ENCODE measurements at regions of chr1 and their contacts with region 1.

Region 1: DNA sequence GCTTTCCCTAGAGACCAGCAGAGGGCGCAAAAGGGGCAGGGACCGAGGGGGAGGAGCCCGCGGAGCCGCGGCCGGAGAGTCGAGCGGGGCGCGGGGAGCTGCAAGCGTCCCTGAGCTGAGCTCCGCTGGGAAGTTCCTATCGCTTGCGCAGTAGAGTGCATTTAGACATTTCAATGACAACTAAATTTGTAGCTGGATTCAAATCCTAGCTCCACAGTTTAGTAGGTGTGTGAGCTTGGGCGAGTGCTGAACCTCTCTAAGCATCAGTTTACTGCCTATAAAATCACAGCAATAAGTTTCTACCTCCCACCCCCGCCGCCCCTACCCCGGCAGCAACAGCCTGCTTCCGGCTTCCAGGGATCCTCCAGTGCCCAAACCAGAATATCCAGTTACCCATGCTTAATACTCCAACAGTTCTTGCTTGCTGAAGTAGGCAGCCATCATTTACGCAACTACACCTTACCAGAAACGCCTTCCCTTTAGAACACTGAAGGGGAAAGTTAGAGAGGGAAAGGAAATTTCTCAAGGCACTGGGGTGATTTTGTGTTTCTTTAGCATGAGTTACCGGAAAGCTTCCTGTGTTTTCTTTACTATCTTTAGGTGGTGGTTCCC is 9.1 kb downstream of the TLR5 start:
- DNase-seq: peak; percentile 84
- H3K4me3 ChIP-seq: peak overlapping the region; percentile 17 to 38 (median 32)
- H3K27ac ChIP-seq: peak overlapping the region; percentile 30
- H3K4me1 ChIP-seq: peaks cover 30% of the 10 kb centered on the region
- H3K27me3 ChIP-seq: no peaks in the 10 kb centered on the region
- CTCF ChIP-seq: peak; percentile 82 to 94

Region 2: GRCh38 chr1:223189903-223190724 is 56.2 kb after region 1 on chr1:
- CTCF ChIA-PET with region 1: no interaction called
- dilution Hi-C with region 1: loop called (anchors 5 kb)
- in situ Hi-C with region 1: no loop called
- intact Hi-C with region 1: no loop called
- DNase-seq: peak; percentile 92
- H3K4me3 ChIP-seq: no peak overlapping the region
- H3K27ac ChIP-seq: peak overlapping the region; percentile 50
- H3K4me1 ChIP-seq: peaks cover 12% of the 10 kb centered on the region
- H3K27me3 ChIP-seq: no peaks in the 10 kb centered on the region
- CTCF ChIP-seq: no peak

Region 3: DNA sequence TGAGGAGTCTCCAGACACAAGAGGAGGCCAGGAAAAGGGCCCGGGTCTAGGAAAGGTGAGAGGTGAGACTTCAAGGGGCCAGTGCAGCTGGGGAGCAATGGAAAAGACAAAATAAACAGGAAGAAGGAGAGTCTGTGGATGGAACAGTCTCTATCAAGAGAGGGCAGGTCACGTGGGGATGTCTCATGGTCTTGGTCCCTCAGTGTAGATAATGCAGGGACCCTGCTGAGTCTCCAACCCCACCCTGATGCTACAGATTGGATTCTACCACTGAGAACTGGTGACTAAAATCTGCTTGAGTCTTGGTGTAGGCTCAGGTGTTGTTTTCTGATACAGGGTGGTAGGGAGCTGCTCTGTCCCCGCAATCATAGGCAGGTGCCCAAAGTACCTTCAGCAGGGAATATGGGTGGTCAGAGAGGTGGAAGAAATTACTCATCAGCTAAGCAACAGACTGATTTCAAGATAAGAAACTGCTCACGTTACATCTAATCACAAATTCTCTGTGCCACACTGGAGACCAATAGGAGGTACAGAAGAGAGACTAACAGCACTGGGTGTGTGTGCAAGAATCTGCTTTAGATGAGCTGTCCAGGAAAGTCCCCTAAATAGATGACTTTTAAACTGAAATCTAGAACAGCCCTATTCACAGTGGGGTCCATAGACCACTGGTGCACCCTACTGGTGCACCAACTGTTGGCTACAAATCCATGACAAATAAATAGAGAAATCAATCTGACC is 110.6 kb after region 1 on chr1:
- CTCF ChIA-PET with region 1: interaction called, 3 read pairs
- dilution Hi-C with region 1: no loop called
- in situ Hi-C with region 1: no loop called
- intact Hi-C with region 1: loop called (anchors 1 kb)
- DNase-seq: peak; percentile 41
- H3K4me3 ChIP-seq: no peak overlapping the region
- H3K27ac ChIP-seq: no peak overlapping the region
- H3K4me1 ChIP-seq: peaks cover 5% of the 10 kb centered on the region
- H3K27me3 ChIP-seq: no peaks in the 10 kb centered on the region
- CTCF ChIP-seq: peak; percentile 8 to 24

Region 4: GRCh38 chr1:223429313-223429731 is 295.4 kb after region 1 on chr1:
- CTCF ChIA-PET with region 1: interaction called, 5 read pairs
- dilution Hi-C with region 1: no loop called
- in situ Hi-C with region 1: no loop called
- intact Hi-C with region 1: loop called (anchors 2 kb)
- DNase-seq: peak; percentile 86
- H3K4me3 ChIP-seq: no peak overlapping the region
- H3K27ac ChIP-seq: peak overlapping the region; percentile 42
- H3K4me1 ChIP-seq: peaks cover 17% of the 10 kb centered on the region
- H3K27me3 ChIP-seq: no peaks in the 10 kb centered on the region
- CTCF ChIP-seq: peak; percentile 11 to 43

Region 5: GRCh38 chr1:223683586-223684487 is 549.9 kb after region 1 on chr1:
- CTCF ChIA-PET with region 1: interaction called, 9 read pairs
- dilution Hi-C with region 1: no loop called
- in situ Hi-C with region 1: loop called in 1 of 2 experiments (anchors 10 kb)
- intact Hi-C with region 1: loop called (anchors 1 kb)
- DNase-seq: peak; percentile 54
- H3K4me3 ChIP-seq: no peak overlapping the region
- H3K27ac ChIP-seq: no peak overlapping the region
- H3K4me1 ChIP-seq: no peaks in the 10 kb centered on the region
- H3K27me3 ChIP-seq: no peaks in the 10 kb centered on the region
- CTCF ChIP-seq: peak; percentile 69 to 72